SK-N-SH (cell line): ENCODE measurements at regions of chr1 and their contacts with region 1.

Region 1: GRCh38 chr1:146036965-146037646 is 15.6 kb upstream of the HJV start:
- DNase-seq: no peak
- H3K4me3 ChIP-seq: peak overlapping the region; percentile 64 to 91
- H3K27ac ChIP-seq: peak overlapping the region; percentile 78 to 88
- H3K4me1 ChIP-seq: peaks cover 0 to 3% of the 10 kb centered on the region in 2 experiments; a peak in 2 of 4 replicates
- H3K27me3 ChIP-seq: no peaks in the 10 kb centered on the region
- CTCF ChIP-seq: no peak
- EP300 ChIP-seq: peak in 1 of 2 experiments; percentile 17; a peak in 1 of 4 replicates
- RAD21 ChIP-seq: no peak

Region 2: DNA sequence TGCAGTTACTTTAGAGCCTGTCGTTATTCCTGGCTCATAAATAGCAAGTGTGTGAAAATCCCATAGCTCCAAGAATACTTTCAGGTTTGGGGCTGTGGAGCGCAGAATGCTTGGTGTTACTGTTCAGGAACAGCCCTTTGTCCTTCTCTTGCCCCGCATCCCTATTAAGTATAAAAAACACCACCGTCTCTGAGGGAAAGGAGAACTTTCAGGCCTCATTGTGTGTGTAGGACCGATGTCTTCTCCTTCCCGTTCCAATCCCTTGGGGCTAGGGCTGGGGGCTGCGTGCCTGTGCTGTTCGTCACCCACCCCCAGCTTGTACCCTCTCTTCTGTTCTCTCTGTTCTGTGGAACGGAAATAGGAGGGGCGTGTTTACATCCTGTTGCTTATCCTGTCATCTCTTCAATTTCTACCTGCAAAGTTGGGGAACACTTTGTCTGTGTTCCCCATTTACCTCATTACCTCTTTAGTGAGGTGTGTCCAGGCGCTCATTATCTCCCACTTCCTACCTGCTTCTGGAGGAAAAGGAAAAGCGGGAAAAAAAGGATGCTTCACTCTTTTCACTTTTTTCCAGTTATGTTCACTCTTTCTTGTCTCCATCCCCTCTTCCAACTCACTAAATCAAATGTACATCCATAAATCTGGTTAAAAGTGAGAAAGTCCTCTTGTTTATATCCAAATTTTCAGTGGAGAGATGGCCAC is 39.9 kb before region 1 on chr1:
- CTCF ChIA-PET with region 1: no interaction called
- POLR2A ChIA-PET with region 1: no interaction called
- DNase-seq: peak; percentile 42
- H3K4me3 ChIP-seq: peak overlapping the region; percentile 64 to 90
- H3K27ac ChIP-seq: peak overlapping the region; percentile 44 to 98; a peak in 3 of 4 replicates
- H3K4me1 ChIP-seq: peaks cover 14 to 43% of the 10 kb centered on the region in 2 experiments; a peak in 3 of 4 replicates
- H3K27me3 ChIP-seq: no peaks in the 10 kb centered on the region
- CTCF ChIP-seq: no peak
- EP300 ChIP-seq: no peak
- RAD21 ChIP-seq: no peak

Region 3: GRCh38 chr1:146020058-146021049 is 16.8 kb before region 1 on chr1:
- CTCF ChIA-PET with region 1: interaction called, 20 read pairs
- POLR2A ChIA-PET with region 1: no interaction called
- DNase-seq: no peak
- H3K4me3 ChIP-seq: no peak overlapping the region
- H3K27ac ChIP-seq: no peak overlapping the region
- H3K4me1 ChIP-seq: peaks cover 2 to 9% of the 10 kb centered on the region in 2 experiments; a peak in 3 of 4 replicates
- H3K27me3 ChIP-seq: no peaks in the 10 kb centered on the region
- CTCF ChIP-seq: no peak
- EP300 ChIP-seq: no peak
- RAD21 ChIP-seq: no peak

Region 4: DNA sequence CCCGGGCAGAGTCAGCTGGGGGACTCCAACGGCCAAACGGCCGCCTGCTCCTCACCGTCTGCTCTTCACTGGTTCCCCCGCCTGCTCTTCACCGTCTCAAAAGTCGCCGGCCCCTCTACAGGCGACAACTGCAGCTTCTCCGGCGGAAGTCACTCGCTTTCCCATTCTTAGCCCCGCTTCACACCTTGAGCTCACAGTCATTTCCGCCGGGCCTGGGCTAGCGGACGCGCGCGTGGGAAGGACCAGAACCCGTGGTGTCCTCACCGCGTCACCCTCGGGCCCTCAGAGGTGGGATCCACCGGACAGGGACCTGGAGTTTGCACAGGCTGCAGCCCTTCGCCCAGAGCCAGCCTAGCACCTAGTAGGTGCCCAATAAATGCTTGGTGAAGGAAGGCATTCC is 12.3 kb after region 1 on chr1:
- CTCF ChIA-PET with region 1: interaction called, 9 read pairs
- POLR2A ChIA-PET with region 1: interaction called, 35 read pairs
- DNase-seq: no peak
- H3K4me3 ChIP-seq: no peak overlapping the region
- H3K27ac ChIP-seq: no peak overlapping the region
- H3K4me1 ChIP-seq: no peaks in the 10 kb centered on the region; a peak in 1 of 4 replicates
- H3K27me3 ChIP-seq: no peaks in the 10 kb centered on the region
- CTCF ChIP-seq: no peak
- EP300 ChIP-seq: no peak
- RAD21 ChIP-seq: no peak